ENCODE measurements at regions of chr1 and their contacts with region 1.

Region 1: GRCh38 chr1:233094691-233095090 is 144.3 kb downstream of the NTPCR start:
- H3K4me3 ChIP-seq: no peak overlapping the region
- H3K27ac ChIP-seq: no peak overlapping the region
- H3K4me1 ChIP-seq: no peaks in the 10 kb centered on the region
- CTCF ChIP-seq: no peak

Region 2: DNA sequence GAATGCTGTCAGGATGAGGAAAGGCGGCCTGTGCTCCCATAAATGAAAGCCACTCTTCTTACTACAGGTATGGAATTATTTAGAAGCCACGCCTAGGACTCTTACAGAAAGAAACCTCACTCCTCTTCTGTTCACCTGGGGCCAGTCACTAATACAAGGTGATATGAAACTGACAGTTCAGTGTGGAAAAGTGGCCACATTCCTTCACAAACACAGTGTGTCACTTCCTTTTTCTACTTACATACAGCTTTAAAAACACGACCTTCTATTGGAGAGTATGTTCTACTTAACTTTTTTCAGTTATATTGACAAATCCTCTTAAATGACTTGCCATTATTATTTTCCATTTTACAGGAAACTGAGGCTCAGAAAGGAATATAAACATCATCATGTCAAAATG is 37.8 kb after region 1 on chr1:
- CTCF ChIA-PET with region 1: no interaction called
- POLR2A ChIA-PET with region 1: interaction called, 10 read pairs
- H3K4me3 ChIP-seq: no peak overlapping the region
- H3K27ac ChIP-seq: no peak overlapping the region
- H3K4me1 ChIP-seq: no peaks in the 10 kb centered on the region
- CTCF ChIP-seq: no peak

Measured in HEK293 (cell line).